Posterior vena cava (tissue), 2 donors: ENCODE measurements at regions of chr6 and their contacts with region 1.

Region 1: DNA sequence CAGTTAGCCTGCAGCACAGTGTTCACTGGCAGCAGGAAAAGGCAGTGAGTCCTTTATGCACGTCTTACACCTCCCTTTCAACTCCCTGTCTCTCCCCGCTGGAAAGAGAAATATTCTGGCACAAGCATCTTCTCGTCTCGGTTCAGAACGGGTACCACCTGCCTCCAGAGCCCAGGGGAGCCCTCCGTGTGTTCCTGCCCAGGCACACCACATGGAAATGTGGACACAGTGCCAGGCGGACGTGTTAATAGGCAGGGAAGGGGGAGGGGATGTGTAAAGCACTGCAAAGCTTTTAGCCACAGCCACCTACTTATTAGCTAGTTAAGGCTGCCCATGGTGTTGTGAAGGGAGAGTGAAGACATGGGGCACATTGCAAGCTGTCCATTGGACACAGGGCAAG is 219.7 kb downstream of the FARS2 start:
- DNase-seq: no peak

Region 2: GRCh38 chr6:6538261-6538660 is 1057.2 kb after region 1 on chr6:
- intact Hi-C with region 1: loop called in 1 of 2 experiments (anchors 5 kb)
- DNase-seq: no peak